HCT116 (cell line): ENCODE measurements at regions of chr15 and their contacts with region 1.

Region 1: GRCh38 chr15:90648137-90649070 is 68.7 kb upstream of the BLM start:
- DNase-seq: peak; percentile 48
- ATAC-seq: peak; percentile 81
- H3K4me3 ChIP-seq: no peak overlapping the region
- H3K27ac ChIP-seq: no peak overlapping the region
- H3K4me1 ChIP-seq: peaks cover 0 to 23% of the 10 kb centered on the region in 2 experiments; a peak in 3 of 4 replicates
- H3K27me3 ChIP-seq: no peaks in the 10 kb centered on the region
- CTCF ChIP-seq: peak; percentile 82 to 91 (median 87)
- POLR2A ChIP-seq: no peak
- RAD21 ChIP-seq: peak; percentile 96

Region 2: GRCh38 chr15:90046911-90047392 is 601.5 kb before region 1 on chr15:
- CTCF ChIA-PET with region 1: no interaction called
- POLR2A ChIA-PET with region 1: no interaction called
- RAD21 ChIA-PET with region 1: no interaction called
- intact Hi-C with region 1: no loop called
- DNase-seq: no peak
- ATAC-seq: peak; percentile 49; the same call in 1 of the 2 replicates
- H3K4me3 ChIP-seq: no peak overlapping the region
- H3K27ac ChIP-seq: no peak overlapping the region
- H3K4me1 ChIP-seq: peaks cover 11 to 15% of the 10 kb centered on the region in 2 experiments; a peak in 2 of 4 replicates
- H3K27me3 ChIP-seq: no peaks in the 10 kb centered on the region
- CTCF ChIP-seq: no peak
- POLR2A ChIP-seq: no peak
- RAD21 ChIP-seq: no peak

Region 3: DNA sequence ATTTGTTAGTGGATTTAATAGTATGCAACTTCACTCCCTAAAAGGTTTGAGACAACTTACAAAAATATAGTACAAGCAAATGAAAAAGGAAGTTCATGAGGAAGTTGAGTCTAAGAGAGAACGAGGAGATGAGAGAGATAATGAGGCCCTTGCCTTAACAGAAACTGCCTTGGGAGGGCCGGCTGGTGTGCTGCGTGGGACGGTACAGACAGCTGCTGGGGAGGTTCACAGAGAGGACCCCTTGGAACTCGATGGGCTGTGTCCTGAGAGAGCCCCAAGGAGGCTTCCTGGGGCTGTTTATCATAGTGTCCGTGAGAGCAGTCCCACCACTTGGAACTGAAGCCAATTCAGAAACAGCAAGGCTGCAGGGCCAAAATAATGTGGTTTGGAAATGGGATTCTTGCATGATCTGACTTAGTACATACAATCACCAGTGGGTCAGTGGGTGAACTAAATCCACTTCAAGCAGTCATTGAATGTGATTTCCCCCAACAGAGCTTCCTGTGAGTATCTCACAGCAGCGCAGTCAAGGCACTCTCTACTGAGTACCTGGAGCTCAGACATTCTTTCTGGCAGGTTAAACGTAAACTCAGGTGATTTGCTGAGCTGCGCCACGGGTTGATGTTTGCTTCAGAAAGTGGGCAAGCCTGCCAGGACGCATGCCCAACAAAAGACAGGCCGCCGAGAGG is 27.9 kb before region 1 on chr15:
- CTCF ChIA-PET with region 1: no interaction called
- POLR2A ChIA-PET with region 1: no interaction called
- RAD21 ChIA-PET with region 1: no interaction called
- intact Hi-C with region 1: no loop called
- DNase-seq: no peak
- ATAC-seq: no peak
- H3K4me3 ChIP-seq: no peak overlapping the region
- H3K27ac ChIP-seq: no peak overlapping the region
- H3K4me1 ChIP-seq: no peaks in the 10 kb centered on the region
- H3K27me3 ChIP-seq: no peaks in the 10 kb centered on the region
- CTCF ChIP-seq: no peak
- POLR2A ChIP-seq: no peak
- RAD21 ChIP-seq: no peak

Region 4: DNA sequence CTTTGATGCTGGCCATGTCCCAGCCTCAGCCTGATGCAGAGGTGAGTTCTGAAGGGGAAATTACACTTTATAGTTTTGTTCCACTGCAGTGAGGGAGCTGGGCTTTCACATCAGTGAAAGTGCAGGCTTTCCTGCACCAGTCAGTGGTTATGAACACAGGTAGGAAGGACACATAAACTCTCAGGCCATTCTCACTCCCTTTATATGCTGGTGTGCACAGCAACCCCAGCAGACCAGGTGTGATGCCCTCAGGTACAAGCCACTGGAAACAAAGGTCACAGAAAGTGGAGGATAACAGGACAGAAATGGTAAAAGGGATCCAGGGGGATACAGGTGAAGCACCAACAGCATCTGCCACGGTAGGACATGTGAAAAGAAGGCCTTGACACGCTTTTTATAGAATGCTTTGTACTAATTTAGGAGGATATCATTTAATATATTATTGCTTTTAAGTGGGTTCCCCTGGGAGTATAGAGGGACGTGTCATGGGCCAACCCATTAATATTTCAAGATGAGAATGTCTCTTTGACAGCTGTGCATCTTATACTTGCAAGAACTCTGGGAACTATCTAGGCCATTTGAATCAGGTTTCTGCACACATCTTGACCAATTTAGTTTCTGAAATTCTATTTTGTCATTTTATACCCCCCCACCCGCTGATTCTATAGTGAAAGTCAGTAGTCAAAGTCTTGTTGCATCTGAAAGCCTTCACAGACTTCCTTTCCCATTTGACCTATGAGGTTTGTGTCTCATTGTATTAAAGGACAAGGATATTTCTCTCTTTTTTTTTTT is 43.8 kb after region 1 on chr15:
- CTCF ChIA-PET with region 1: no interaction called
- POLR2A ChIA-PET with region 1: no interaction called
- RAD21 ChIA-PET with region 1: no interaction called
- intact Hi-C with region 1: loop called (anchors 2 kb)
- DNase-seq: no peak
- ATAC-seq: no peak
- H3K4me3 ChIP-seq: no peak overlapping the region
- H3K27ac ChIP-seq: no peak overlapping the region
- H3K4me1 ChIP-seq: 0 out of 4 replicates have a peak, but pooled peaks cover 0 to 3% of the 10 kb centered on the region in 2 experiments
- H3K27me3 ChIP-seq: no peaks in the 10 kb centered on the region
- CTCF ChIP-seq: no peak
- POLR2A ChIP-seq: no peak
- RAD21 ChIP-seq: no peak

Region 5: DNA sequence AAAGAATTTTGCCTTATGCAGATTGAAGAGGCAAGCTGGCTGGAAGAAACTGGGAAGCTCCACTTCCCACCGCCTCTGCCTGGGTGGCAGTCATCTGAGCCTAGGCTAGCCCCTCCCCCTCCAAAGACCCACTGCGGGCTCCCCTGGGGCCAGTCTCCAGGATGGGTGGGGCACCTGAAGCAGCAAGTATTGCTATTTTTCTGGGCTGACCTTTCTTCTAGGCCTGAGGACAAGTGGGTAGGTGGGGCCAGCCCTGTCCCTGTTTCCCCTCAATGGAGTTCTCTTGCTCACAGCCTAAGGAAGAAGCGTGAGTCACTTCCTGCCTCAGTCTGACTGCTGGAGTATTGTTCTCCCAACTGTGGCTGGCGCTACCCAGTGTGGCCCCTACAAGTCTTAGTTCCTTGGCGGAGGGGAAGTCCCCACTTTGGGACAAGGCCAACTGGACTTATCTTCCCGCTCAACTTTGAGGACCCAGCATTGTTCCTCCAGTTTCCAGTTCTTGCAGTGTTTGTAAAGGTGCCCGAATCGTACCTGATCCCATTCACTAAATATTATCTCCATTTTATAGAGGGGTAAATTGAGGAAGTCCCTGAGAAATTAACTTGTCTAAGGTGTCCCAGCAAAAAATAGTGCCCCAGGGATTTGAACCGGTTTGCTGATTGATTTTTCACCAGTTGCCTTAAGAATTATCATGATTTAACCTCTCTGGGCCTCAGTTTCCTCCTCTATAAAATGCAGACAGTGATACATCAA is 221.4 kb after region 1 on chr15:
- CTCF ChIA-PET with region 1: interaction called, 3 read pairs
- POLR2A ChIA-PET with region 1: no interaction called
- RAD21 ChIA-PET with region 1: no interaction called
- intact Hi-C with region 1: loop called (anchors 5 kb)
- DNase-seq: peak; percentile 85
- ATAC-seq: peak; percentile 64
- H3K4me3 ChIP-seq: peak overlapping the region; percentile 74 to 86
- H3K27ac ChIP-seq: peak overlapping the region; percentile 95
- H3K4me1 ChIP-seq: peaks cover 57 to 62% of the 10 kb centered on the region in 2 experiments
- H3K27me3 ChIP-seq: no peaks in the 10 kb centered on the region
- CTCF ChIP-seq: no peak
- POLR2A ChIP-seq: peak; percentile 19
- RAD21 ChIP-seq: no peak

Region 6: GRCh38 chr15:90886041-90886614 is 237.7 kb after region 1 on chr15:
- CTCF ChIA-PET with region 1: interaction called, 26 read pairs
- POLR2A ChIA-PET with region 1: no interaction called
- RAD21 ChIA-PET with region 1: interaction called, 6 to 8 read pairs
- intact Hi-C with region 1: loop called (anchors 1 kb)
- DNase-seq: no peak
- ATAC-seq: peak; percentile 84
- H3K4me3 ChIP-seq: no peak overlapping the region
- H3K27ac ChIP-seq: no peak overlapping the region
- H3K4me1 ChIP-seq: peaks cover 0 to 3% of the 10 kb centered on the region in 2 experiments; a peak in 1 of 4 replicates
- H3K27me3 ChIP-seq: no peaks in the 10 kb centered on the region
- CTCF ChIP-seq: peak; percentile 95 to 100 (median 98)
- POLR2A ChIP-seq: no peak
- RAD21 ChIP-seq: peak; percentile 99